IMR-90 (cell line): ENCODE measurements at regions of chr1 and their contacts with region 1.

Region 1: DNA sequence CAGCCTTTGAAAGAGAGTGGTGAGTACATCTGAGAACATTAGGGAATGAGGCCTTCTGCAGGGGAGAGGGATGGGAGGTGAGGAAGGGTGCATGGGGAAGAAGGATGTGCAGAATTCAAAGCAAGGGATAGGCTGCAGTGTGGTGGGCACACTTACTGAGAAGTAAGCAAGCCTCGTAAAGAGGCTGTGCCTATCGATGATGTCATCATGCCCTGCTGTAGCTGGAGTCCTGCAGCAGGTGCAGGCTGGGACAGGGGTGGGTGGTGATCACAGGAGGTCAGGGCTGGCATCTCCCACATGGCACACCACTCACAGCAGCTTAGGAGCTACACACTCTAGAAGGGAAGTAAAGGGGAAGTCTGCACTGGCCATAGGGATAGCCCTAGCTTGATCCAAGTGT is 16.2 kb downstream of the ZSCAN20 start:
- DNase-seq: no peak
- ATAC-seq: no peak
- H3K4me3 ChIP-seq: no peak overlapping the region
- H3K27ac ChIP-seq: no peak overlapping the region
- H3K4me1 ChIP-seq: no peaks in the 10 kb centered on the region
- H3K27me3 ChIP-seq: no peaks in the 10 kb centered on the region
- CTCF ChIP-seq: no peak
- POLR2A ChIP-seq: no peak
- RAD21 ChIP-seq: no peak

Region 2: DNA sequence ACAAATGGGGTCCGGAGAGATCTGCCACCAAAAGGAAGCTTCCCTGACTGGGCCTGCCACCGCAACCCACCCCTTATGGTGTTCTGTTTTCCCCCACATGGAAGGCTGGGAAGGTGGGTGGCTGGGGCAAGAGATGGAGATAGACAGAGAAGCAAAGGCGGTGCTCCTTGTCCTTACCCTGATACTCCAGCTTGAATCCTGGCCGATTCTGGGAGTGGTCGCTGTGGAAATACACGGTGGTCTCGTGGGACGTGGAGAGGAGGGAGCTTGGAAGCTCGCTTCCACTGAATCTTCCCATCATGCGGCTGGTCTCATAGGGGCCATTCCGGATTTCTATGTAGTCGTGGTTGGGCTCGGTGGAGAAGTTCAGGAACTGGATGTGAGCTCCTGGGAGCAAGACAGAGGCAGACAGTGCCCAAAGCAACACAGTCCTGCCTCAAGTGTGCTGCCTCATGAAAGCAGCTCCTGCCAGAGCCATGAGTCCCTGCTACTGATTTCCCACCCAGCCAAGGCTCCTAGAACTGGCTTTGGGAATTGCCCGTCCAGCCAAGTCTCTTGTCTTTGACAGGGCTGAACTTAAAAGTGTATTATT is 122.3 kb after region 1 on chr1:
- CTCF ChIA-PET with region 1: no interaction called
- POLR2A ChIA-PET with region 1: no interaction called
- dilution Hi-C with region 1: no loop called
- in situ Hi-C with region 1: no loop called
- intact Hi-C with region 1: loop called (anchors 5 kb)
- DNase-seq: no peak
- ATAC-seq: no peak
- H3K4me3 ChIP-seq: no peak overlapping the region
- H3K27ac ChIP-seq: no peak overlapping the region
- H3K4me1 ChIP-seq: no peaks in the 10 kb centered on the region
- H3K27me3 ChIP-seq: peaks cover 4% of the 10 kb centered on the region
- CTCF ChIP-seq: no peak
- POLR2A ChIP-seq: no peak
- RAD21 ChIP-seq: no peak